Activated CD4-positive, alpha-beta T cell treated with anti-CD3 and anti-CD28 coated beads for 36 hours (primary cell): ENCODE measurements at regions of chr5 and their contacts with region 1.

Region 1: DNA sequence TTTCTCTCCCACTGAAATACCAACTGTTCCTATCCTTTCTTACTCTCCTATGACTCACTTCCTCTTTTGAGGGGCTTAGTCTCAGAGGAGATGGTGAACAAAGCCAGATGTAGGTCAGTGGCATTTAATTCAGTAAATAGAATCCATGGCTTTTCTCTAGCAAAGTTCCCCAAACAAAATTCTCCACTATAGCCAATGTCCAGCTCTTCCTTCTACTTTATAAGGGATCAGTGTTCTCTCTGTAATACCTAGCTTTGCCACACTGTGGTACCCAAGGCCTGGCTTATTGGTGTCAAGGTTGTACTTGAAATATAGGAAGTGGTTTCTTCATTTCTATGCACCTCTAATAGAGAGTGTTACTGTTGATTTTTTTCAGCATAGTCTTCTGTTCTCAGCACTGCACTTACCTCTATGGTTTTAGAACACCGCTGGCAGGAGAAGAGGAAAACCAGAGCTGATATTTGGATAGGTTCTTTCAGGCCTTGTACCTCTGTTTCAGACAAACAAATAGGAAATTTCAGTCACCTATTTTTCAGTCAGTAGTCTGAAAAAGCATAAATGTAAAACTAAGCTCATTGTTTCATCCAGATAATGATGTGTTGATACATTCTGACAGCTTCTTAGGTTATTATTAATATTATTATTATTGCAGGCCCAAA is 40.6 kb upstream of the ITGA2 start:
- DNase-seq: peak; percentile 75
- ATAC-seq: peak; percentile 98
- H3K4me3 Mint-ChIP-seq: no peak overlapping the region
- H3K27ac Mint-ChIP-seq: no peak overlapping the region
- H3K4me1 Mint-ChIP-seq: peaks cover 16% of the 10 kb centered on the region
- H3K27me3 Mint-ChIP-seq: peaks cover 7% of the 10 kb centered on the region

Region 2: DNA sequence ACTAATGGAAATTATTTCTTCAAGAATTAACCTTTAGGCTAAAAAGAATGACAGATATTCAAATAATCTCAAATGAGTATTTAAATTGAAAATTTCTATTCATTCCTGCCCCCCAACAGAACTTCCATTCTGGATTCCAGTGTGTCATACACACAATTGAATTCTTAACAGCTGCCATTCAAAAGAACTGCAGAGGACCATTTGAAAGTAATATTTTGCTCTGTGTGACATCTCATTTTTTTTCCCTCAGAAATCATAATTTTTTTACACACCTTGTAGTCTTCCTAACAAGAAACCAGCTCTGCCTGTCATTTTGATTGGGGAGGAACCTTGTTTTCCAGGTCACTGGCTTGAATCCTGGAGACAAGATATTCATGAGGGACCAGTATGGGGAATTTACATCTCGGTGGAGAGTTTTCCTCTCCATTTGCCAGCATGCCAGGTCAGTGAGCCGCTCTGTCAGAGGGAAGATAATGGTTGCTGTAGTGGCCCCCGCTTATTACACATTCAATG is 519.5 kb before region 1 on chr5:
- CTCF ChIA-PET with region 1: no interaction called
- POLR2A ChIA-PET with region 1: no interaction called
- intact Hi-C with region 1: no loop called
- DNase-seq: no peak
- ATAC-seq: no peak
- H3K4me3 Mint-ChIP-seq: no peak overlapping the region
- H3K27ac Mint-ChIP-seq: no peak overlapping the region
- H3K4me1 Mint-ChIP-seq: no peaks in the 10 kb centered on the region
- H3K27me3 Mint-ChIP-seq: peaks cover 4% of the 10 kb centered on the region

Region 3: DNA sequence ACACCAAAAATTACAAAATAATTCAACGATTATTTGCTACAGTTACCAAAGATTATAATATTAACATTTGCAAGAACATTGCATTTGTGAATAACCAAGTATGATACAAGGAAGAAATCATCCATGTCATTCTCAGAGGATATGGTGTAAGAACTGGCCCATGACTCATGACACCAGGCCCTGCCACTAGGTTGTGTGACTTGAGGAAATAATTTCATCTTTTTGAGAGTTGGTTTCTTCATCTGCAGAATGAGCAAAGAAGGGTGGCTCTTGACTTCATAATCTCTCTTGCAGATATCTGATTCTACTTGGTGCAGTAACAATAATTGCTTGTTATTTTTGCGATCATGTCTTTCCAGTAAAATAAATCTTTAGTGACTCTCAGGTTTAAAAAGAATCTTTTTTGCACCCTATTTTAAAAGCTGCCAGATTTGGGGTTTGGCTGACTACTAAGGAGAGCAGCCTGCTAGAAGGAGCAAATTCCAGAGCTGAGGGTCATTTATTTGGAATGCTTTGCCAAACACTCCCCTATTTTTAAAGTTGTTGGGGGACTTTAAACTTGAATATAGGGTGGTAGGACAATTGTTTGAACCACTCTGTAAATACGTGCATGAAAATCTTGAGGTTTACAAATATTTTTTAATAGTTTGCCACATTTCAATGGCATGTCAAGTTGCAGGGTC is 137.3 kb before region 1 on chr5:
- CTCF ChIA-PET with region 1: no interaction called
- POLR2A ChIA-PET with region 1: no interaction called
- intact Hi-C with region 1: no loop called
- DNase-seq: peak; percentile 35
- ATAC-seq: peak; percentile 63
- H3K4me3 Mint-ChIP-seq: no peak overlapping the region
- H3K27ac Mint-ChIP-seq: no peak overlapping the region
- H3K4me1 Mint-ChIP-seq: peaks cover 4% of the 10 kb centered on the region
- H3K27me3 Mint-ChIP-seq: peaks cover 2% of the 10 kb centered on the region

Region 4: DNA sequence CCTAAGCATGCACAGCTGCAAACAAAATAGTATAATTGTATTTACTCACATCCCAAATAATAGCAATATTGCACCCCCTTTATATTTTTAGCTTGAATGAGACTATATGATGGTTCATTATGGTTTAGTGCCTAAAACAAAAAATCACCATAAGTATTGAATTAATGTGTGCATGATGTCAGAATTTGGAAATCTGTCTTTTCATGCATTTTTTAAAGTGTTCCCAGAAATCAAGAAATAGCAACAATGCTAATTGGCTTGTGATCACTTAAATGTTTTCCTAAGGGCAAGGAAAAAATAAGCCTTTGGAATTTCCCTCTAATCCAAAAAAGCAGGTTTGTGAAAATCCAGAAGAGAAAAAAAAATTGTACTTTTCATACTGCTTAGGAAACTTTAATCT is 10.3 kb before region 1 on chr5:
- CTCF ChIA-PET with region 1: interaction called, 11 read pairs
- POLR2A ChIA-PET with region 1: no interaction called
- intact Hi-C with region 1: no loop called
- DNase-seq: no peak
- ATAC-seq: no peak
- H3K4me3 Mint-ChIP-seq: no peak overlapping the region
- H3K27ac Mint-ChIP-seq: no peak overlapping the region
- H3K4me1 Mint-ChIP-seq: no peaks in the 10 kb centered on the region
- H3K27me3 Mint-ChIP-seq: no peaks in the 10 kb centered on the region

Region 5: GRCh38 chr5:53008751-53009150 is 60.2 kb after region 1 on chr5:
- CTCF ChIA-PET with region 1: interaction called, 3 read pairs
- POLR2A ChIA-PET with region 1: no interaction called
- intact Hi-C with region 1: loop called in 1 of 2 experiments (anchors 2 kb)
- DNase-seq: peak; percentile 65
- ATAC-seq: peak; percentile 92
- H3K4me3 Mint-ChIP-seq: no peak overlapping the region
- H3K27ac Mint-ChIP-seq: peak overlapping the region; percentile 39
- H3K4me1 Mint-ChIP-seq: peaks cover 53% of the 10 kb centered on the region
- H3K27me3 Mint-ChIP-seq: peaks cover 10% of the 10 kb centered on the region

Region 6: DNA sequence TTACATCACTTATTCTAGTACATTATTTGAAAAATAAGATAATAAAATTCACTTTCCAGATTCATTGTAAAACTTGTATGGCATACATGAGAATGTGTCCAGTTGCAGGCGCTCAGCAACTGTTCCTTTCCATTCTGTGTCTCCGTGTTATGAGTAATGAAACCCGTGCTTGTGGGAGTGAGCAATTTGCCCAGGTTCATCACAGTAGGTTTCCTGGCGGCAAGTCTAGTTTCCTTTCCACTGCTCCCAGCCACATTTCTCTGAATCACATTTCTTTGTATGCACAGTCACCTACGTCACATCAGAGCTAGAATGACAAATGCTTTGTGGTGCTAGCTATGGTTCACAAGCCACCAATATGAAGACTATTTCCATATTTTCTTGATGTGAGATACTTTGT is 121.1 kb after region 1 on chr5:
- CTCF ChIA-PET with region 1: interaction called, 18 read pairs
- POLR2A ChIA-PET with region 1: no interaction called
- intact Hi-C with region 1: loop called in 1 of 2 experiments (anchors 1 kb)
- DNase-seq: peak; percentile 85
- ATAC-seq: peak; percentile 97
- H3K4me3 Mint-ChIP-seq: no peak overlapping the region
- H3K27ac Mint-ChIP-seq: peak overlapping the region; percentile 24
- H3K4me1 Mint-ChIP-seq: peaks cover 18% of the 10 kb centered on the region
- H3K27me3 Mint-ChIP-seq: peaks cover 12% of the 10 kb centered on the region

Region 7: DNA sequence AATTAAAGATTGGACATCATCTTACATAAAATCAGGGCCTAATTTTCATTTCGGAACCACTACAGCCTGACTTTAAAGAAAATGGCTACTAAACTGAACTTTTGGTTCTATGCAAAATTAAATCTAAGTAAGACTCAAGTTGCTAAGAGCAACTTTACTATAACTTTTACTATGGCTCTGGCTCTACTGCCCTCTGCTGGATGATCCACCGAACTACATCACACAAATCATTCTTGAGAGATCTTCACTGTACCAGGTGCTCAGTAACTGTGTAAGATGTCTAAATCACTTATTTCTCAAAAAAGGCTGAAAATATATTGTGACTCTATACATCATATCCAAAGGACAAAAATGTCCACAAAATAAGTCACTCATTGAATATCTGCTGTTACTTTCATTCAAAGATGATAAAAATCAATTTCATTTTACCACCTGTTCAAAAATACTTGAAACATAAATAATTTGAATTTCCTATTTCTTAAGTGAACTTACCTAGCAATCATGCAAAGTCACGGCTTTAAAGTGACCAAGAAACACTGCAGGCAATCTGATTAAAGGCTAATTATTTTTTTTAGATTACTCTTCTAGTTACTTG is 147.5 kb after region 1 on chr5:
- CTCF ChIA-PET with region 1: interaction called, 143 read pairs
- POLR2A ChIA-PET with region 1: interaction called, 3 read pairs
- intact Hi-C with region 1: loop called (anchors 1 kb)
- DNase-seq: peak; percentile 83
- ATAC-seq: peak; percentile 66
- H3K4me3 Mint-ChIP-seq: no peak overlapping the region
- H3K27ac Mint-ChIP-seq: no peak overlapping the region
- H3K4me1 Mint-ChIP-seq: peaks cover 6% of the 10 kb centered on the region
- H3K27me3 Mint-ChIP-seq: no peaks in the 10 kb centered on the region